Activated T-helper 1 cell treated with anti-CD3 and anti-CD28 coated beads, Interleukin-12 subunit alpha, Interleukin-12 subunit beta, Interleukin-2, Interleukin-4 antibody, amounts not matched to agents 30 ng/mL and 10 ng/mL and 1 ng/mL, durations not matched to agents 14 hours and 24 hours and 36 hours (primary cell): ENCODE measurements at regions of chr9 and their contacts with region 1.

Region 1: DNA sequence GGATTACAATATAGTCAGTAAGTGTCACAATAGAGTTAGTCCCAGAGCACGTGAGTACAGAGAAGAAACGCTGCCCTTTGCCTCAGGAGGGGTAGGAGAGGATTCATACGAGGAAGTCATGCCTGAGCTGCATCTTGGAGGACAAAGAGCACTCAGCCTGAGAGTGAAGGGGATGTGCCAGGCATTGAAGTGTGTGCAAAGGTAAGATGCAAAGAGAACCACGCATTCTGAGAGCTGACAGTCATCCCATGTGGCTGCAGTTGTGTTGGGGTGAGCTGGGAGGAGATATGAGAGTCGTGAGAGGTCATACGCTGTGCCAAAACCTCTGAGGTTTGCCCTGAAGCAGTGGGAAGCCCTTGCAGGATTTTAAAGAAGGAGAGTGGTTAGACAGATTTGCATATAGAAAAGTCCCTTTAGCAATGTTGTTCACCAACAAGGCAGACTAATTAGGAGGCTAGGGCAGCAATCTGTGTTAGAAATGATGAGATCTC is 97.5 kb downstream of the PIP5K1B start:
- DNase-seq: peak; percentile 31
- H3K4me3 Mint-ChIP-seq: no peak overlapping the region
- H3K27ac Mint-ChIP-seq: no peak overlapping the region
- H3K4me1 Mint-ChIP-seq: peaks cover 18% of the 10 kb centered on the region
- H3K27me3 Mint-ChIP-seq: peaks cover 3% of the 10 kb centered on the region

Region 2: DNA sequence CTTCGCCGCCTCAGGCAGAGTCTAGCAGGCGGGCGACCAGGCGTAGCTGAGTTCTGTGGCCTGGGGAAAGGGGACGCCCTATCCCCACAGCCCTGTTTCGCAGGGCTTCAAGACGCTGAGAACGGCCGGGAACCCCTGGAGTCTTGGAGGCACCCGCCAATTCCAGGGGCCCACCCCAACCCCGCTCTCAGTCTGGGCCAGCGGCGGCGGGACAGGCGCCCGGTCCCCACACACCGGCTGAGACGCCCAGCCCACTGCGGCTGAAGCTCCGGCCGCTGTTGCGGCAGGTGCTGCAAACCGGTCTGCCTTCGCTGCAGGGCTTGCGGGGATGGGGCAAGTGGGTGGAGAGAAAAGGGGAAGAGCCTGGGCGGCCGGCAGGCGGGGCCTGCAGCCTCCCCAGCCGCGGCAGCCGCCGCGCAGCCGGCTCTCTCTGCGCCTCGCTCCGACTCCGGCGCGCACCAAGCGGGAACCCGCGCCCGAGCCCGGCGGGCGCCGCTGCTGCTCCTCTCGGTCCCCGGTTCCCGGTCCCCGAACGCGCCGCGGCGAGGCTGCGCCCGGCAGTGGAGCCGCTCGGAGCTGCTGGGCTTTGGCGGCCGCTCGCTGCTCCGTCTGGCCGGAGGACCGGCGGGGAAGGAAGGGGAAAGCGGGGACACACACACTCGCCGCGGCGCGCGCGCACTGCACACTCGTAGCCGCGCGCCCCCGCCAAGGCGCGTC is 97.6 kb before region 1 on chr9 and contains the start of gene PIP5K1B:
- intact Hi-C with region 1: loop called (anchors 1 kb)
- DNase-seq: peak; percentile 44
- H3K4me3 Mint-ChIP-seq: peak within 1 kb of the TSS; percentile 85
- H3K27ac Mint-ChIP-seq: peak within 1 kb of the TSS; percentile 81
- H3K4me1 Mint-ChIP-seq: peaks cover 27% of the 10 kb centered on the region
- H3K27me3 Mint-ChIP-seq: peaks cover 57% of the 10 kb centered on the region
- total RNA-seq, gene PIP5K1B: 77.4 and 78.5 TPM in 2 replicates

Region 3: DNA sequence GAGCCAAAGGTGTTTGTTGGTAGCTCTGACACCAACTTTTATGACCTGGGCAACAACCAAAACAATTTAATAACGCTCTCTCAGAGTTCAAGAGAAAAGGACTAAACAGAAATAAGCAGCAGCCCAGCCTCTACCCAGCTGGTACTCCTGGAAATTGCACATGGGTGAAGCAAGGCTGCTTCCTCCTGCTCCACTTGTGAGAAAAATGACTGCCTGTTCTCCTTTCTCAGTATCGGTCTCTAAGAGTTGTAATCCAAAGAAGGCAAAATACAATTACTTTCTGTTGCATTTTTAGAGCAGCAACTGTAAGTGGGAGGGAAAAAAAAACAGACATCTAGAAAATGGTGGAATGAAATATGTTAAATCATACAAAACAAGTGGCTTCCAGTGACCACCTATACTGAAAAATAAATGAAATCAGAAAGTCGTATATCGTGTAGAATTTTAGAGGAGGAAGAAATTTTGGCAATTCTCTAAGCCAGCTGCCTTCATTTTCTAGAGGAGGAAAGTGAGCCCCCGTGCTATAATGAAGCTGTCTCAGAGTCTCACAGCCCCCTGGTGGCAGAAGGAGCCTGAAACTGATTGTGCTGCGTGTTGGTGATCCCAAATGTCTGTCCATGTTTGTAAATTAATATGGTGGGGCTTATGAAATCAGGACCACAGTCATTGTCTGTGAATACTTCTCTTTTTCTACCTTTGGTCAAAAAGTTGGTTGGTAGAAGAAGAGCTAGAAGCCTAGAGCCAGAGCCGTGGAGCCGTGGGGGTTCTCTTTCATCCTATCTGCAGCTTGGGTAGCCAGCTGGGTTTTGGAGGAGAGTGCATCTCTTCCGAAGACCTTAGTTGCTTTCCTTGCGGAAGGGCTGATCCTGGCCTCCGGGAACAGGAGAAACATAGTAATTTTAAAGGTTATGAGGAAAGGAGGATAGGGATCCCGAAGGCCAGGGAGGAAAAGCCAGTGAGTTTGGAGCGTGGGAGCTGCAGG is 42.4 kb after region 1 on chr9:
- intact Hi-C with region 1: loop called (anchors 2 kb)
- DNase-seq: no peak
- H3K4me3 Mint-ChIP-seq: no peak overlapping the region
- H3K27ac Mint-ChIP-seq: peak overlapping the region; percentile 65
- H3K4me1 Mint-ChIP-seq: peaks cover 24% of the 10 kb centered on the region
- H3K27me3 Mint-ChIP-seq: no peaks in the 10 kb centered on the region

Region 4: DNA sequence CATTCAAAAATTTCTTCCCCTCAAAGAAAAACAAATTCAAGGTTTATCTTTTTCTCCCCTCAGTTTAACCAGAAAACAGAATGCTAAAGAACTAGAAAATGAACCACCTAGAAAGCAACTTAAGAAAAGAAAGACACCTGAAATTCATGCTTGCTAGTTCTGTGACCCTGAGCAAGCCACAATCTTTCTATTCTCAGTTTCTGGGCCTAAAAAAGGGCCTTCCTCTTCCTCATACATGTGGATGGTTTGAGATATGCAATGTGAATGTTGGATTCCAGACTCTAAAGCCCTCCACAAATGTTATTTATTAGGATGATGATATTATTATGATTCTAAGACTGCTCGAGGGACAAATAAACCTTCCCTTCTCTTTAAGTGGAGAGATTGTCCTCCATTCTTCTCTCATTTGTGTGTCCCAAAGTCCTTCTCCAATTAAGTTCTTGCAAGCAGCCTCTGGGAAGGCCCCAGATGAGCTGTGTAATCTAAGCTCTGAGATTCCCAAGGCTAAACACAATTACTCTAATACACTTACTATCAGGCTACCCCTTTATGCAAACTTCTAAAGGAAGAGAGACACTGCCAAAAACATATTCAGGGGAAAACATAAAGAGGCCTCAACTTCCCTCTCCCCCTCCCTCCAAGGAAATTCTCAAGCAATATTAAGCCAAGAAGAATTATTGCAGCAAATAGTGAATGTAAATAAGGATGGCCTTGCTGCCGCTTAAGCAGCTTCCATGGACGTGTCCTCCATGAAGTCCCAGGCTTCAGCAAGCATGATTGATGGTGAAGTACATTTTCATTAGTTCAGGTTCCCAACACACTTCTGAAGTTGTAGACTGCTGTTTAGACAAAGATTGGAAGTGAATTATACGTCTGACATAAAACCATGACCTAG is 131.1 kb after region 1 on chr9:
- intact Hi-C with region 1: loop called (anchors 5 kb)
- DNase-seq: no peak
- H3K4me3 Mint-ChIP-seq: no peak overlapping the region
- H3K27ac Mint-ChIP-seq: no peak overlapping the region
- H3K4me1 Mint-ChIP-seq: peaks cover 26% of the 10 kb centered on the region
- H3K27me3 Mint-ChIP-seq: peaks cover 33% of the 10 kb centered on the region

Region 5: DNA sequence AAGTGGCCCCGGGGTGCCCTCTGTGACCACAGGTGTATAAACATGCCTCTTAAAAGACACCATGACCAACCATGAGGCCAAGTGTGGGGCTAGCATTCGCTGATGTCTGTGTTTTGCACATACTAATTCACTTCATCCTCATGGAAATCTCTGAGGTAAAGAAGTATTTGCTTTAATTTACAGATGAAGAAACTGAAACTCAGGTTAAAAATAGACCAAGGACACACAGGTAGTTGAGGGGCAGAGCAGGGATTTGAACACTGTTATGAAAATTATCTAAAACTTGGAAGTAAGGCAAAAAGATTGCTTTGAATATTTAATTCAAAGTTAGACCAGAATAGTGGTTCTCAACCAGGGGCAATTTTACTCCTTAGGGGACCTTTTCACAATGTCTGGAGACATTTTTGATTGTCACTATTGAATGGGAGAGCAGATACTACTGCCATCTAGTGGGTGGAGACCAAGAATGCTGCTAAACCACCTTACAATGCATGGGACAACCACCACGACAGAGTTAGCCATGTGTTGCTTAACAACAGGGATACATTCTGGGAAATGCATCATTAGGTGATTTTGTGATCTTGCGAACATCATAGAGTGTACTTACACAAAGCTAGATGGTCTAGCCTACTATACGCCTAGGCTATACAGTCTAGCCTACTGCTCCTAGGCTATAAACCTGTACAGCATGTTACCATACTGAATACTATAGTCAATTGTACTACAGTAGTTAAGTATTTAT is 225.0 kb after region 1 on chr9:
- intact Hi-C with region 1: loop called (anchors 5 kb)
- DNase-seq: peak; percentile 32
- H3K4me3 Mint-ChIP-seq: no peak overlapping the region
- H3K27ac Mint-ChIP-seq: peak overlapping the region; percentile 18
- H3K4me1 Mint-ChIP-seq: peaks cover 51% of the 10 kb centered on the region
- H3K27me3 Mint-ChIP-seq: peaks cover 1% of the 10 kb centered on the region

Region 6: GRCh38 chr9:69223605-69224004 is 421.0 kb after region 1 on chr9:
- intact Hi-C with region 1: no loop called
- DNase-seq: no peak
- H3K4me3 Mint-ChIP-seq: no peak overlapping the region
- H3K27ac Mint-ChIP-seq: no peak overlapping the region
- H3K4me1 Mint-ChIP-seq: no peaks in the 10 kb centered on the region
- H3K27me3 Mint-ChIP-seq: no peaks in the 10 kb centered on the region